A549 (cell line): ENCODE measurements at regions of chr5 and their contacts with region 1.

Region 1: GRCh38 chr5:134289509-134290113 is 63.7 kb upstream of the PPP2CA start:
- DNase-seq: peak; percentile 75 to 87
- ATAC-seq: peak; percentile 99
- H3K4me3 ChIP-seq: no peak overlapping the region
- H3K27ac ChIP-seq: no peak overlapping the region
- H3K4me1 ChIP-seq: no peaks in the 10 kb centered on the region; the same call in 2 of the 3 replicates
- CTCF ChIP-seq: peak; percentile 97
- EP300 ChIP-seq: no peak
- POLR2A ChIP-seq: no peak
- RAD21 ChIP-seq: peak; percentile 99

Region 2: GRCh38 chr5:134176511-134177368 is 112.9 kb before region 1 on chr5 and contains the start of gene SKP1:
- CTCF ChIA-PET with region 1: interaction called, 345 read pairs
- POLR2A ChIA-PET with region 1: interaction called, 14 read pairs
- DNase-seq: peak; percentile 58 to 88
- ATAC-seq: peak; percentile 84 to 89
- H3K4me3 ChIP-seq: peak within 1 kb of the TSS; percentile 89
- H3K27ac ChIP-seq: peak within 1 kb of the TSS; percentile 94 to 98
- H3K4me1 ChIP-seq: peaks cover 19% of the 10 kb centered on the region; the same call in 2 of the 3 replicates
- CTCF ChIP-seq: no peak
- EP300 ChIP-seq: no peak
- POLR2A ChIP-seq: peak; percentile 98
- RAD21 ChIP-seq: no peak
- polyA plus RNA-seq, gene SKP1: 608 and 776 TPM in 2 replicates

Region 3: DNA sequence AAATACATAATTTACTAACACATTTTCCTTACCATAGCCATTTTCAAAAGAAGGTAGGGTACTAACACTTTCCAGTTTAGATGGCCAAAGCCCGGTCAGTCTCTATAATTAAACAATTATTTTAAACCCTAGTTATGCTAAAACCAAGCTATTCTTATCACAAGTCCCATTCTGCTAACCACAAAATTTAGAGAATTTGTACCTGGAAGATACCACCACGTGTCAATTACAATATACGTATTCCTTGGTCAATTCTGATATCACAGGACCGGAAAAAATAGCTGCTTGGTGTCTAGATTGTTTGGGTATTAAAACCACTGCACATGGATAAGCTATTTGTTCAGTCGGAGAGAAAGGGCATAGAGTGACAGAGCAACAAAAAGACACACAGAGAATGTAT is 93.9 kb before region 1 on chr5:
- CTCF ChIA-PET with region 1: interaction called, 345 read pairs
- POLR2A ChIA-PET with region 1: no interaction called
- DNase-seq: no peak
- ATAC-seq: no peak
- H3K4me3 ChIP-seq: no peak overlapping the region
- H3K27ac ChIP-seq: no peak overlapping the region
- H3K4me1 ChIP-seq: no peaks in the 10 kb centered on the region; the same call in 2 of the 3 replicates
- CTCF ChIP-seq: no peak
- EP300 ChIP-seq: no peak
- POLR2A ChIP-seq: no peak
- RAD21 ChIP-seq: no peak

Region 4: DNA sequence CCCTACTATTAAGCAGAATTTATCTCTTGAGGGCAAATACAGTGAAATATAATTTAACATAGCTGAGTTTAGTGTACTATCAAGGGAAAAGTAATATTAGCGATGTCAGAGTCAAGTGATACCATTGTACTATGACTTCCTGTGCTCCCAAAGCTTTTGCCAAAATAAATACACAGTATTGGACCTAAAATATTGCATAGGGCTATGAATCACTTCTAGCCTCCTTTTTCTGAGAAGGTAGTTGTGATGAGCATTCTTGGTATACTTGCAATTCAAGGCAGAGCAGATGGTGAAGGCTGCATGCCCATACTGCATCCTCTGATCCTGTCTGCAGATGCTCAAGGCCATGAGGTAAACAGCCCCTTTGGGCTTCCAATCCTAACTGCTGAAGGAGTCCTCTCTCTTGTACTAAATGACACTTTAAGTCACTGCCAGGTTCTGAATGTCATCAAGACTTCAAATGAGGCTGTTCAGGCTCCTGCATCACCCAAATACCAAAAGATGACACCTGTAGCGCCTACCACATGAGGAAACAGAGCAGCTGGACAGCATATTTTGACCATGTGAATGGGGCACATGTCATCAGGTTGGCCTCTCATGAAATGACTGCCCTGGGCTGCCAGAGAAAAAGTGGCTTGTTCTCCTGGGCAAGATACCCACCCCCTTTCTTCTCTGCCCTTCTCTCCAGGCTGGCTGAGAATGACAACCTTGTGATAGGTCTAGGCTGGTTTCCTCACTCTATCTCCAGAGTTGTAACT is 34.0 kb before region 1 on chr5:
- CTCF ChIA-PET with region 1: interaction called, 14 read pairs
- POLR2A ChIA-PET with region 1: no interaction called
- DNase-seq: no peak
- ATAC-seq: no peak
- H3K4me3 ChIP-seq: no peak overlapping the region
- H3K27ac ChIP-seq: no peak overlapping the region
- H3K4me1 ChIP-seq: peaks cover 13% of the 10 kb centered on the region
- CTCF ChIP-seq: no peak
- EP300 ChIP-seq: no peak
- POLR2A ChIP-seq: no peak
- RAD21 ChIP-seq: no peak

Region 5: DNA sequence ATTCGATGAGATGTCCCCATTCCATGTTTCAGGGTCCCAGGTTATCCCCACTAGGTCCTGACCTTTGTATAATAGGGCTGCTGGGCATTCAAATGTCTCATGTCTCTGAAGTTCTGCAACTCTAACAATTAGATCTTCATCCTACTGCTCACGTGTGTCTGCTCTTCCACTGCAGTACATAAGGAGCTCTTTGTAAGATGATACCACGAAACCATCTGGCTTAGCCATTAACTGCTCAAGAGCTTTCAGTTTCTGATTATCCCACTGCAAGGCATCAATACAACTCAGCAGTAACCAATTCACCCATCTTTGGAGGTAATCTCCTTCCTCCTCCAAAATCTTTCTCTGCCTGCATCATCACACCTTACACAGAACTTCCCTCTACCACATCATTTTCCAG is 13.8 kb before region 1 on chr5:
- CTCF ChIA-PET with region 1: interaction called, 31 read pairs
- POLR2A ChIA-PET with region 1: no interaction called
- DNase-seq: no peak
- ATAC-seq: no peak
- H3K4me3 ChIP-seq: no peak overlapping the region
- H3K27ac ChIP-seq: no peak overlapping the region
- H3K4me1 ChIP-seq: peaks cover 15% of the 10 kb centered on the region
- CTCF ChIP-seq: no peak
- EP300 ChIP-seq: no peak
- POLR2A ChIP-seq: no peak
- RAD21 ChIP-seq: no peak